A673 (cell line): ENCODE measurements at regions of chr11 and their contacts with region 1.

Region 1: DNA sequence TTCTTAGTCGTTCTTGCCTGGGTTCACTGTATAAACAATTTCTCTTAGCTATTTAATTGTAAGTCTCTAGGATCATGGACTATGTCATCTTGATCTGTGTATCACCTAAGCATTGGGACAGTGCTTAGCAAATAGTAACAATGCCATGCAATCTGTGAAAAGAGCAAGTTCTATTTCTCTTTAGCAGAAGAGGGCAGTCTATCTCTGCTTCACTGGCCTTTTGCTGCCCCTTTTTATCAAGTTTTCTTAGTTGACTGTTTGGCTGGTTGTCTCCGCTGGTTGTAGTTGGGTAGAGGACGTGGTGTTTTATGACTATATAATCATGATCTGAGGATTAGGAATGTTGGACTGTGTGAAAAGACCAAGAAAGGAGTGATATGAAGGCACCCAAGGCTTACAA is 315.0 kb downstream of the JRKL start:
- DNase-seq: peak; percentile 45
- H3K4me3 ChIP-seq: no peak overlapping the region
- H3K27ac ChIP-seq: no peak overlapping the region
- H3K4me1 ChIP-seq: peaks cover 3% of the 10 kb centered on the region
- H3K27me3 ChIP-seq: no peaks in the 10 kb centered on the region
- CTCF ChIP-seq: peak; percentile 45

Region 2: GRCh38 chr11:95337175-95337957 is 1367.5 kb before region 1 on chr11:
- CTCF ChIA-PET with region 1: interaction called, 10 read pairs
- POLR2A ChIA-PET with region 1: no interaction called
- intact Hi-C with region 1: no loop called
- DNase-seq: peak; percentile 75
- H3K4me3 ChIP-seq: no peak overlapping the region
- H3K27ac ChIP-seq: peak overlapping the region; percentile 76
- H3K4me1 ChIP-seq: peaks cover 35% of the 10 kb centered on the region
- H3K27me3 ChIP-seq: no peaks in the 10 kb centered on the region
- CTCF ChIP-seq: no peak

Region 3: GRCh38 chr11:96794152-96794551 is 89.3 kb after region 1 on chr11:
- CTCF ChIA-PET with region 1: no interaction called
- POLR2A ChIA-PET with region 1: no interaction called
- intact Hi-C with region 1: loop called (anchors 2 kb)
- DNase-seq: peak; percentile 73
- H3K4me3 ChIP-seq: no peak overlapping the region
- H3K27ac ChIP-seq: no peak overlapping the region
- H3K4me1 ChIP-seq: peaks cover 8% of the 10 kb centered on the region
- H3K27me3 ChIP-seq: peaks cover 4% of the 10 kb centered on the region
- CTCF ChIP-seq: peak; percentile 56

Region 4: GRCh38 chr11:97140885-97141494 is 436.1 kb after region 1 on chr11:
- CTCF ChIA-PET with region 1: no interaction called
- POLR2A ChIA-PET with region 1: no interaction called
- intact Hi-C with region 1: loop called (anchors 5 kb)
- DNase-seq: peak; percentile 53
- H3K4me3 ChIP-seq: no peak overlapping the region
- H3K27ac ChIP-seq: no peak overlapping the region
- H3K4me1 ChIP-seq: no peaks in the 10 kb centered on the region
- H3K27me3 ChIP-seq: no peaks in the 10 kb centered on the region
- CTCF ChIP-seq: peak; percentile 80